Right lobe of liver (tissue), 6 donors: ENCODE measurements at regions of chr16 and their contacts with region 1.

Region 1: DNA sequence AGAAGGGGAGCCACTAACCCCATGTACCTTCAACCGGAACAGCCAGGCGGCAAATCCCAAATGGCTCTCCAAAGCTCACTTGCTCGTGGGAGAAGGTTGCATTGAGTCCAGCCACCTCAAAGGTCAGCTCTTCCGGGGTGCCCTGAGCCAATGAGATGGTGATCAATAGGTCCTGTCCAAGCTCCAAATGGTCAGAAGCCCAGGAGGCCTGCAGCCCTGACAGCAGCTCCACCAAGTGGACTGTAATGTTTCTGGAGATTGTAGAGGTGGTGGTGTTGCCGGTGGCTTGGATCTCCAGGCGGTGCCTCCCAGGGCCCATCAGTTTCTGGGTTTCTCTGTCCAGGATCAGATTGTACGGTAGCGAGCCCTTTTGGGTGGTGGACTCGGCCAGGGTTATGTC is 39.9 kb upstream of the BCO1 start:
- DNase-seq: peak; percentile 65 to 85 (median 74)
- ATAC-seq: peak; percentile 97 to 99 (median 98)
- H3K4me3 ChIP-seq: peak overlapping the region in 2 of 3 donors; percentile 14 to 23
- H3K27ac ChIP-seq: peak overlapping the region in 1 of 3 donors; percentile 18
- H3K4me1 ChIP-seq: peaks cover 0 to 4% (median 0%) of the 10 kb centered on the region in 4 donors
- H3K27me3 ChIP-seq: no peaks in the 10 kb centered on the region
- CTCF ChIP-seq: peak; percentile 46 to 73 (median 57)
- POLR2A ChIP-seq: no peak

Region 2: GRCh38 chr16:81035398-81035974 is 163.1 kb before region 1 on chr16 and contains the start of gene ATMIN:
- intact Hi-C with region 1: loop called in 1 of 2 experiments (anchors 10 kb)
- DNase-seq: peak; percentile 89 to 90 (median 90)
- ATAC-seq: peak; percentile 99 to 100 (median 100)
- H3K4me3 ChIP-seq: peak within 1 kb of the TSS; percentile 67 to 86 (median 75)
- H3K27ac ChIP-seq: peak within 1 kb of the TSS in 2 of 3 donors; percentile 20 to 70
- H3K4me1 ChIP-seq: peaks cover 0 to 14% (median 6%) of the 10 kb centered on the region in 4 donors
- H3K27me3 ChIP-seq: no peaks in the 10 kb centered on the region
- CTCF ChIP-seq: peak; percentile 94 to 100 (median 98)
- POLR2A ChIP-seq: no peak
- total RNA-seq, gene ATMIN: 12.8 to 15.5 (median 14.6) TPM